ENCODE measurements at regions of chr6 and their contacts with region 1.

Region 1: DNA sequence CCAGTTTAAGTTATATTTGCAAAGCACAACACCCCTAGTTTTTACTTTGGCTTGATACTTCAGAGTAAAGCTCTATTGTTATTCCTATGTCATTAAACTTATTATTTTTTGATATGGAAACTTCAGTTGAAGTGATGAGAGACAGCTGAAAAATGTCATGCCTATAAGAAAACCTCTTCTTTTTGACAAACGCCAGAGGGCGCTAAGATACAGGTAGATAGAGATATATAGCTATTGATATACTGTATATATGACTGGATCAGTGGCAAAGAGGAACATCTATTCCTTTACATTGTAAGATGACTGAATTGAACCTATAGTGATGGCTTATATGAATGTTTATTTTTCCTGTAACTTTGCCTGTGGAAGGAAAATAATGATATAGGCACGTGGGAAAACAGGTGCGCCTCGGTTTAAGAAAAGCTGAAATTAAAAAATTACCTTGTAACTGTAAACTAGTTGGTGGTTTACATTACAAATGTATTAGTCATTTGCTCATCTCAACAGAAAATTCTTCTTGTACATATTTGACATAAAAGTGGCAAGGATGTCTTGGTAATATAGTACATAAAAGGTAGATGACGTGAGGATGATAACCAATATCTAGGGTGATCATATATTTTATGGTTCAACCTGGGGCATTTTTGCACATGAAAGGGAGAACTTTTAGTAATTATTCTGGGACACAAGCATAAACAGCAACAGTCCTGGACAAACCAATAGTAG is 74.1 kb downstream of the LAMA4 start:
- DNase-seq: peak; percentile 38 to 81
- ATAC-seq: peak; percentile 74 to 90; a peak in 4 of 6 replicates
- H3K4me3 ChIP-seq: no peak overlapping the region
- H3K27ac ChIP-seq: peak overlapping the region in 1 of 2 experiments; percentile 54; a peak in 2 of 6 replicates
- H3K4me1 ChIP-seq: no peaks in the 10 kb centered on the region
- CTCF ChIP-seq: peak; percentile 76
- EP300 ChIP-seq: no peak
- POLR2A ChIP-seq: no peak
- RAD21 ChIP-seq: peak; percentile 85 to 89

Region 2: GRCh38 chr6:111541026-111541681 is 639.1 kb before region 1 on chr6:
- CTCF ChIA-PET with region 1: no interaction called
- POLR2A ChIA-PET with region 1: no interaction called
- DNase-seq: no peak
- ATAC-seq: no peak
- H3K4me3 ChIP-seq: no peak overlapping the region
- H3K27ac ChIP-seq: no peak overlapping the region
- H3K4me1 ChIP-seq: no peaks in the 10 kb centered on the region
- CTCF ChIP-seq: no peak
- EP300 ChIP-seq: no peak
- POLR2A ChIP-seq: no peak
- RAD21 ChIP-seq: no peak

Region 3: GRCh38 chr6:112163295-112164257 is 16.7 kb before region 1 on chr6:
- CTCF ChIA-PET with region 1: interaction called, 20 read pairs
- POLR2A ChIA-PET with region 1: no interaction called
- DNase-seq: peak; percentile 35 to 45
- ATAC-seq: peak; percentile 99 to 100
- H3K4me3 ChIP-seq: no peak overlapping the region
- H3K27ac ChIP-seq: no peak overlapping the region
- H3K4me1 ChIP-seq: no peaks in the 10 kb centered on the region
- CTCF ChIP-seq: peak; percentile 66
- EP300 ChIP-seq: no peak
- POLR2A ChIP-seq: no peak
- RAD21 ChIP-seq: peak; percentile 65 to 74

Region 4: GRCh38 chr6:112199001-112199403 is 18.7 kb after region 1 on chr6:
- CTCF ChIA-PET with region 1: interaction called, 13 read pairs
- POLR2A ChIA-PET with region 1: no interaction called
- DNase-seq: no peak
- ATAC-seq: no peak
- H3K4me3 ChIP-seq: no peak overlapping the region
- H3K27ac ChIP-seq: 0 out of 6 replicates have a peak overlapping the region, but pooled peaks of 1 of the 2 experiments have one; percentile 26
- H3K4me1 ChIP-seq: peaks cover 19% of the 10 kb centered on the region
- CTCF ChIP-seq: no peak
- EP300 ChIP-seq: no peak
- POLR2A ChIP-seq: no peak
- RAD21 ChIP-seq: no peak

Region 5: DNA sequence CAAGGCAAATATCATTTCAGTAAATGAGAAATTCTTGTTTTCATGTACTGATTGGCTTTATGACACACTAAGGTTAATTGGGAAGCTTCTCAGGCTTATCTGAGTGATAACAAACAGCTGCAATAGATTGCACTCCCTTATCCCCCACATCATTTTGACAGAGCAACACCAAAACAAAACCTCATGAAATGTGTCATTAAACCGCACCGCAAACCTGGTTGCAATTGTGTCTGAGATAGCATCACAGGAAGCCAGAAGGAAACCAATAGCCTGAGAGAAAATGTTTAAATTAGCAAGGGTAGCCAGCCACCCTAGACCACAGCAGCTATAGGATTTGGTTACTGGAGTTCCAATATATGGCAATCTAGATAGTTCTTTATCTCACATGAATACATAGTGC is 105.8 kb after region 1 on chr6:
- CTCF ChIA-PET with region 1: interaction called, 10 read pairs
- POLR2A ChIA-PET with region 1: no interaction called
- DNase-seq: no peak
- ATAC-seq: no peak
- H3K4me3 ChIP-seq: no peak overlapping the region
- H3K27ac ChIP-seq: no peak overlapping the region
- H3K4me1 ChIP-seq: peaks cover 4% of the 10 kb centered on the region; the same call in 1 of the 3 replicates
- CTCF ChIP-seq: no peak
- EP300 ChIP-seq: no peak
- POLR2A ChIP-seq: no peak
- RAD21 ChIP-seq: no peak

Region 6: DNA sequence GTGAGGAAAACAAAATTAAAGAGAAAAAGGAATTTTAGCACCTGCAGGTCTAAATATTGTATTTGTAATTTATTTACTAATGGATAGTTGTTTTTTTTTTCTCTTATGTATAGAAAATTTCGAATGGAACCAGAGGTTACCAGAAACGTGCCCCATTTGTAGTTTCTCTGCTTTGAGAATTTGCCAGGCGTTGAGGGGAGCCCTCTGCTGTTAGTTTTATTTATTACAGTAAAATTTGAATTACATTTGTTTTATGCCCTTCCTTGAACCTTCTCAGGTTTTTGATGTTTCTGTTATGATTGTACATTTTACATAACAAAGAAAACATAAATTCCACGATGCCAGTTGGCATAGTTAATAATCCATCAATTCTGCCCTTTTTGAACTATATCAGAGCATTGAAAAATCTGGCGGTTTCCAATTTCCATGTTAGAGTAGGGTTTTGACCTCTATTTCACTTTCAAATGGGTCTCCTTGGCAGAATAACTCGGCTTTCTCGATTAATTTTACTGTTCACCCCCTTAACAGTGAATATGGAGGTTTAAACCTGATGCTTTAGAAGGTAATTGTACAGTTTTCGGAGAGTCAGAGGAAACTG is 131.8 kb after region 1 on chr6:
- CTCF ChIA-PET with region 1: interaction called, 68 read pairs
- POLR2A ChIA-PET with region 1: interaction called, 6 read pairs
- DNase-seq: peak in 1 of 2 experiments; percentile 7
- ATAC-seq: no peak
- H3K4me3 ChIP-seq: no peak overlapping the region
- H3K27ac ChIP-seq: peak overlapping the region in 1 of 2 experiments; percentile 56; a peak in 2 of 6 replicates
- H3K4me1 ChIP-seq: no peaks in the 10 kb centered on the region
- CTCF ChIP-seq: peak; percentile 69
- EP300 ChIP-seq: no peak
- POLR2A ChIP-seq: no peak
- RAD21 ChIP-seq: peak; percentile 75 to 80

Measured in A549 (cell line).